ENCODE measurements at regions of chr20 and their contacts with region 1.

Region 1: DNA sequence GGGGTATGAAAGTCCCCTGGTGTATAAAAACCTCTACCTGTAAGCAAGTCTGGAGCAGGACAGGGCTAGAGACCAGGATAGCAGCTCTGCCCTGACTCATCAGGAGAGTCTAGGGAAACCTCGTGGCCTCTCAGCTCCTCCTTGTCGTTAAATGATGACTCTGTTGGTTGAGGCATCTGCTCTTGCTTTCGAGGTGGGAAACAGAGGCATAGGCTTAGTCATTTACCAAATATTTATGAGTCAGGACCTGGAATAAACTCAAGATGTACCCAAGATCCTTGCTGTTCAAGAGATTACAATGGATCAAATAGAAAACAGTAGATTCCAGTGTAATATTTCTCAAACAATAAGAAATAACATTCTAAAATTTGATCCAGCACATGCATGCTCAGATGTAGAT is 5.5 kb downstream of the MANBAL start:
- DNase-seq: peak; percentile 98
- ATAC-seq: peak; percentile 93
- H3K4me3 ChIP-seq: no peak overlapping the region
- H3K27ac ChIP-seq: peak overlapping the region; percentile 48
- H3K4me1 ChIP-seq: peaks cover 21% of the 10 kb centered on the region
- H3K27me3 ChIP-seq: no peaks in the 10 kb centered on the region
- CTCF ChIP-seq: no peak

Region 2: DNA sequence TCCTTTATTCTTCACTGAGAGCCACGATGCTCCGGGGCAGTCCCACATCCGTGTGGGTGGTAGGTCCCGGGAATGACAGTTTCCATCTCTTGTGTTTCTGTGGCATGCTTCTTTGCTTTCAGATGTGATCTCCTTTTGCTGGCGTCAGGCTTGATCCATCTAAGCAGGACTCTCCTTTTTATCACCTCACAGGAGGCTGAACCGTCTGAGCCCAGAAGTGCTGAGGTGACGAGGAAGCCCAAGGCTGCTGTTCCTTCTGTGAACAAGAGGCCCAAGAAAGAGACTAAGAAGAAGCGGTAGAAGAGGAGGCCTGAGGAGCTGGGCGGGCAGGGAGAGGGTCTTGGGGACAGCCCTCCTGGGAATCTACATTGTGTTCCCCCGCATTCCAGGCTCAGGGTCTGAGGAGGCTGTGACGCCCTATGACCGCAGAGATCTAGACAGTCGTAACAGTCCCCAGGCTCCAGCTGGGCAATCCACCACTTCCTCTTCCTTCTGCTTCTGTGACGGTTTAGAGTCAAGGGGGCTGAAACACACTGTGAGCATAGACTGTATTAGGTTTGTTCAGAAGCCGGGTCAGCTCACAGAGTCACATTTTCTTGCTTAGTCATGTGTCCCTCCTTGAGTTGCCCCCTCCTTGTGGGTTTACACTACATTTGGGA is 21.2 kb after region 1 on chr20:
- CTCF ChIA-PET with region 1: no interaction called
- POLR2A ChIA-PET with region 1: interaction called, 18 read pairs
- in situ Hi-C with region 1: no loop called
- intact Hi-C with region 1: no loop called
- DNase-seq: no peak
- ATAC-seq: no peak
- H3K4me3 ChIP-seq: no peak overlapping the region
- H3K27ac ChIP-seq: no peak overlapping the region
- H3K4me1 ChIP-seq: no peaks in the 10 kb centered on the region
- H3K27me3 ChIP-seq: no peaks in the 10 kb centered on the region
- CTCF ChIP-seq: no peak